Activated CD8-positive, alpha-beta memory T cell treated with anti-CD3 and anti-CD28 coated beads, Interleukin-2, amount 10 ng/mL, durations not matched to agents 7 days and 5 days (primary cell): ENCODE measurements at regions of chr5 and their contacts with region 1.

Region 1: GRCh38 chr5:132334812-132335211 is 34.7 kb upstream of the SLC22A5 start:
- DNase-seq: no peak
- ATAC-seq: peak; percentile 64
- H3K4me3 Mint-ChIP-seq: no peak overlapping the region
- H3K27ac Mint-ChIP-seq: peak overlapping the region; percentile 35
- H3K4me1 Mint-ChIP-seq: peaks cover 6% of the 10 kb centered on the region
- H3K27me3 Mint-ChIP-seq: no peaks in the 10 kb centered on the region

Region 2: DNA sequence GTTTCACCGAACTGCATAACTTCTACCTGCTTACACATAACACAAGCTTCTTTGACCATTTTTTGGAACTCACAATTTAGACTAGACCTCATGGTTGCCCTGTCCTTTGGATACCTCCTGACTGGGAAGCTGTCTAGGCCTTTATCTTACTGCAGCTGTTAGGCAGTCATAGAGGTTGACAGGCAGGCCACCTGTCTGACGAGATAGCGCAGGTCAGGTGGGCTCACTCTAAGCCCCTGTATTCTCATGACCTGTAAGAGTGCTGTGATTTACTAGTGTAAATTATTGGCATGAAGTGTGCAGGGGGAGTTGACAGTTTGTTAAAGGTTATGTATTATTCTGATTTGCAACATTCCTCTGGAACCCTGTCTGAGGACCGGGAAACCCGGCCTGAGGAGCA is 11.6 kb before region 1 on chr5:
- CTCF ChIA-PET with region 1: interaction called, 10 read pairs
- DNase-seq: peak; percentile 33
- ATAC-seq: no peak
- H3K4me3 Mint-ChIP-seq: no peak overlapping the region
- H3K27ac Mint-ChIP-seq: no peak overlapping the region
- H3K4me1 Mint-ChIP-seq: no peaks in the 10 kb centered on the region
- H3K27me3 Mint-ChIP-seq: no peaks in the 10 kb centered on the region